OCI-LY7 (cell line): ENCODE measurements at regions of chr6 and their contacts with region 1.

Region 1: GRCh38 chr6:139109558-139109957 is 25.3 kb upstream of the HECA start:
- DNase-seq: peak; percentile 45
- H3K4me3 ChIP-seq: no peak overlapping the region
- H3K27ac ChIP-seq: no peak overlapping the region
- H3K4me1 ChIP-seq: peaks cover 20% of the 10 kb centered on the region
- CTCF ChIP-seq: peak; percentile 67

Region 2: GRCh38 chr6:138817822-138818308 is 291.7 kb before region 1 on chr6:
- CTCF ChIA-PET with region 1: no interaction called
- POLR2A ChIA-PET with region 1: no interaction called
- intact Hi-C with region 1: loop called (anchors 2 kb)
- DNase-seq: no peak
- H3K4me3 ChIP-seq: no peak overlapping the region
- H3K27ac ChIP-seq: no peak overlapping the region
- H3K4me1 ChIP-seq: peaks cover 15% of the 10 kb centered on the region
- CTCF ChIP-seq: no peak

Region 3: GRCh38 chr6:138963531-138963930 is 146.0 kb before region 1 on chr6:
- CTCF ChIA-PET with region 1: no interaction called
- POLR2A ChIA-PET with region 1: no interaction called
- intact Hi-C with region 1: no loop called
- DNase-seq: no peak
- H3K4me3 ChIP-seq: no peak overlapping the region
- H3K27ac ChIP-seq: no peak overlapping the region
- H3K4me1 ChIP-seq: no peaks in the 10 kb centered on the region
- CTCF ChIP-seq: no peak